ENCODE measurements at regions of chr7 and their contacts with region 1.

Region 1: GRCh38 chr7:64665980-64666662 is at the start of gene ZNF107:
- DNase-seq: peak; percentile 93 to 96 (median 94)
- ATAC-seq: peak; percentile 100
- H3K4me3 ChIP-seq: peak within 1 kb of the TSS; percentile 53 to 93 (median 74)
- H3K27ac ChIP-seq: peak within 1 kb of the TSS in 10 of 12 donors; percentile 62 to 78 (median 68)
- H3K4me1 ChIP-seq: peaks cover 0 to 16% (median 9%) of the 10 kb centered on the region in 12 donors
- H3K27me3 ChIP-seq: no peaks in the 10 kb centered on the region
- CTCF ChIP-seq: no peak
- POLR2A ChIP-seq: peak in 1 of 2 donors; percentile 52
- total RNA-seq, gene ZNF107: 1.2 to 4.0 (median 1.8) TPM

Region 2: DNA sequence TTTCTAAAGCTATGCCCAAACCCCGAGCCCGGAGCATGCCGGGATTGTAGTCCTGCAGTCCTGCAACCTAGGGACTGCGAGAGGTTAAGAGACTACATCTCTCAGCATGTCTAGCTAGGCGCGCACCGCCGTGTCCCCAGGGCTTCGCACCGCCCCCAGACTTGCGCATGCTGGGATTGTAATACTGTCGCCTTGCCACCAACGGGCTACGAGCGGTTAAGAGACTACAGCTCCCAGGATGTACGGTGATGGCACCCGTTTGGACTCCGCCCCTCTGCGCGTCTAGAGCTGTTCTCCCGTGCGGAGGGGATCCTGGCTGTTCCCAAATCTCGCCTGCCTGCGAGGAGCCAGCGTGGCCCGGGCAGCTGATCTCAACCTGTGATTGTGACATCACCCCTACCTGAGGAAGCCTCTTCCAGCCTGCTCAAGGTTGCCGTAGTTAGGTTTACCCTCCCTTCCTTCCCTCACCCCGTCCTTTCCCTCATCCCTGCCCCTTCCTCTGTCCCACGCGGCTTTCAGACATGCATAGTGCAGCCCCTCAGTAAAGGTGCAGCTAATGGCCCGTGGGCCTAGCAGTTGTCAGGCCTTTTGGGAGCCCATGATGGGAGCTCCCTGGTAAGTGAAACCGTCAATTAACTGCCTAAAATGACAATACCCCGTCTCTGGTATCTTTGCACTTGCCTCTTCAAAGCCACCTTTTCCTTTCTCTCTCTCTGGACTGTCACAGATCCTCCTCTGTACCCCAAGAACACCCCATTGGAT is 358.7 kb before region 1 on chr7:
- intact Hi-C with region 1: loop called in 1 of 10 experiments (anchors 10 kb)
- DNase-seq: peak; percentile 91 to 96 (median 95)
- ATAC-seq: peak; percentile 99 to 100 (median 99)
- H3K4me3 ChIP-seq: peak overlapping the region; percentile 46 to 82 (median 68)
- H3K27ac ChIP-seq: peak overlapping the region; percentile 48 to 92 (median 80)
- H3K4me1 ChIP-seq: peaks cover 0 to 18% (median 7%) of the 10 kb centered on the region in 12 donors
- H3K27me3 ChIP-seq: no peaks in the 10 kb centered on the region
- CTCF ChIP-seq: peak in 2 of 12 donors; percentile 17 to 20
- POLR2A ChIP-seq: peak in 1 of 2 donors; percentile 44

Measured in heart left ventricle (tissue), 16 donors.